Breast epithelium (tissue), 4 donors: ENCODE measurements at regions of chr10 and their contacts with region 1.

Region 1: DNA sequence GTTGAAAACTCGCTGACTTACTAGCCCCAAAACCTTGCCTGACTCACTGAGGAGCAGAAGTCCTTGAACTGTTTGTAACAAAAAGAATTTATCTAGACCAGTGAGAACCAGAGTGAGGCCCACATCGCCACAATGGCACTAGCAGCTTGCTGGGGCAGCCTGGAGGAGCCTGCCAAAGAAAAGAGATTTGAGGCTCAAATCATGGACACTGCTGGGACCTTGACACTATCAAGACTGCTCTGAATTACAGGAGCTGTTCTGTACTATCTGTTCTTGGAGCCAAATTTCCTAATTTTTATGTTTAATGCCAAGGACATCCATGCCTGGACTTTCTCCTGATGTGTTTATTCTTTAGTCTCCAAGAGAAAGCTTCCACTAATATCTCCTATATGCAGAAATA is 82.0 kb upstream of the JCAD start:
- DNase-seq: no peak
- H3K4me3 ChIP-seq: no peak overlapping the region
- H3K27ac ChIP-seq: no peak overlapping the region
- H3K4me1 ChIP-seq: no peaks in the 10 kb centered on the region
- H3K27me3 ChIP-seq: no peaks in the 10 kb centered on the region
- CTCF ChIP-seq: no peak
- POLR2A ChIP-seq: no peak

Region 2: GRCh38 chr10:28710202-28710886 is 1431.1 kb before region 1 on chr10:
- intact Hi-C with region 1: loop called (anchors 5 kb)
- DNase-seq: no peak
- H3K4me3 ChIP-seq: no peak overlapping the region
- H3K27ac ChIP-seq: no peak overlapping the region
- H3K4me1 ChIP-seq: no peaks in the 10 kb centered on the region
- H3K27me3 ChIP-seq: no peaks in the 10 kb centered on the region
- CTCF ChIP-seq: no peak
- POLR2A ChIP-seq: no peak